ENCODE measurements at regions of chr5 and their contacts with region 1.

Region 1: DNA sequence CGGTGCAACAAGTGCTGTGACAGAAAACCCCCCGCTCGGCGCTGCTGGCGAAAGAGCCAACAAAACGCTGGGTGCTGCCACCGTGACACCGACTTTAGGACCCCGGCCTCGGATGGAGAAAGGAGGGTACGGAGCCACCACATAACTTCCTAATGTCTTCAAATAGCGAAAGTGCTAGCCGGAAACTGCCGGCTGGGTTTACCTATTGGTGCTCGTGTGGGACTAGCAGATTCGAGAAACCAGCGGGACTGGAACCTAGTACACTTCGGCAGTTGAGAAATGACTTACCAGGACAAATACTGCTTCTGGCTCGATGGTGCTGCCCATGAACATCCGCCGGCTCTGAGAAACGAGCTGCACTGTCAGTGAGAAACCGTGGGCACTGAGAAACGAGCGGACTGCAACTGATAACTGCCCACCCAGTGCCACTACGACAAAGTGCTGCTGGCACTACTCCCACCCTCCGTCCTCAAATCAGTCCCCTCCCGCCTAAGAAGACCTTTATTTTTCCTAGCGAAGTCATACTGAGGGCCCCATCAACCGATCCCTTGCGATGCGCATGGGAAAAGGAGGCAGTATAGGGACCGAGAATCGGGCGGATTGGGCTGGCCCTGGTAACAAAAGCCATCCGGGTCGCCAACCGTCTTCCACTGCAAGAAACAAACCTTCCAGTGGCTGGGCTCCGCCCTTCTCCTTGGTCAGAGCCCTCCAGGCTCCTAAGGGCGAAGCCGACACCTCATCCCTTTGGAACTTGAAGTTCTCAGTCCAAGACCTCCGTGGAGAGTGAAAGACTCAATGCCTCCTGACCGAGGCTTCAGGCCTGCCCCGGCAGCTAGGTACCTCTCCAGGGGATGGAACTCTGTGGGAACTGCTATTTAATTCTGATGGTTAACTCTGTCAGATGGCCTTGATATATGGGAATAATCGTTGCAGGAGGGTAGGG is 27.0 kb upstream of the ANXA2R start:
- DNase-seq: peak; percentile 77 to 94 (median 88)
- ATAC-seq: peak; percentile 50 to 64 (median 60)
- H3K4me3 ChIP-seq: peak overlapping the region; percentile 92 to 100
- H3K4me3 Mint-ChIP-seq: peak overlapping the region; percentile 95 to 98 (median 96)
- H3K27ac ChIP-seq: peak overlapping the region; percentile 91
- H3K27ac Mint-ChIP-seq: peak overlapping the region; percentile 99 to 100
- H3K4me1 ChIP-seq: peaks cover 22 to 55% of the 10 kb centered on the region in 2 experiments
- H3K4me1 Mint-ChIP-seq: peaks cover 47 to 60% (median 50%) of the 10 kb centered on the region in 3 donors
- H3K27me3 ChIP-seq: no peaks in the 10 kb centered on the region
- H3K27me3 Mint-ChIP-seq: no peaks in the 10 kb centered on the region

Region 2: DNA sequence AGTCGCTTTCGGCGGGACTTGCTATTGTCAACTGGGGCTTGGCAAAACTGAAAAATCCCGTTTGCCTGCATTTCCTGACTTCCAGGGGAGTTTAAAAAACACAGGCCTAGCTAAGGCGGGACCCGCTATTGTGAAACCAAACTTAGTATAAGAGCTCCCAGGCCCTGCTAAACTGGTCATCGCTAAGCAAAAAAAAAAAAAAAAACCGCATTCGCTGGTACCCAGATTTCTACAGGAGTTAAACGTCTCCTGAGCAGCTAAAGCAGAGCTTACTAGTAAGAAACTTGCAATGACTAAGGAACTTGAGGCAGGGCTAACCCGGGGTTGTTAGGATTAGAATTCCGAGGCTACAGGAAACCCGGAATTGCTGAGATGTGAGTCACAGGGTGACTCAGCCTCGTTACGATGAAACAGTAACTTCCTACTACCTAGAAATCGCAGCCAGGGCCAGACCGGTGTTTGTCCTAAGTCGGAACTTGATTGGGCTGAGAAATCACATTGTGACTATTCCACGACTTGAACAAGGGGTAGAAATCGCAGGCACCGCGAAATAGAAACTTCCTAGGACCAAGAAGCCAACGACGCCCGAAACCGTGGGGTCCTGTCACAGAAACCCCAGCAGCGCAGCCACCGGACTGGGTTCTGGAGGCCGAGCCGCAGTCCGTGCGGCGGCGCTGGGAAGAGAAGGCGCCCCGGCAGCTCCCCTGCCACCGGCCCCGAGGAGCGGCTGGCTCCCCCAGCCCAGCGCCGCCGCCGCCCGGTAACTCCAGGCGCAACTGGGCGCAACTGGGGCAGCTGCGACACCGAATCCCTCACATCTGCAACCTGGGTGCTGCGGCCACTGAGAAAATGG is 116.4 kb before region 1 on chr5:
- CTCF ChIA-PET with region 1: interaction called in 1 of 2 experiments, 3 read pairs
- POLR2A ChIA-PET with region 1: interaction called, 3 to 17 read pairs
- DNase-seq: peak; percentile 17 to 80 (median 41)
- ATAC-seq: peak; percentile 17 to 58 (median 44)
- H3K4me3 ChIP-seq: peak overlapping the region; percentile 77 to 98
- H3K4me3 Mint-ChIP-seq: peak overlapping the region; percentile 96 to 98 (median 98)
- H3K27ac ChIP-seq: peak overlapping the region; percentile 99
- H3K27ac Mint-ChIP-seq: peak overlapping the region; percentile 100
- H3K4me1 ChIP-seq: peaks cover 15 to 46% of the 10 kb centered on the region in 2 experiments
- H3K4me1 Mint-ChIP-seq: peaks cover 34 to 45% (median 40%) of the 10 kb centered on the region in 3 donors
- H3K27me3 ChIP-seq: no peaks in the 10 kb centered on the region
- H3K27me3 Mint-ChIP-seq: no peaks in the 10 kb centered on the region

Region 3: DNA sequence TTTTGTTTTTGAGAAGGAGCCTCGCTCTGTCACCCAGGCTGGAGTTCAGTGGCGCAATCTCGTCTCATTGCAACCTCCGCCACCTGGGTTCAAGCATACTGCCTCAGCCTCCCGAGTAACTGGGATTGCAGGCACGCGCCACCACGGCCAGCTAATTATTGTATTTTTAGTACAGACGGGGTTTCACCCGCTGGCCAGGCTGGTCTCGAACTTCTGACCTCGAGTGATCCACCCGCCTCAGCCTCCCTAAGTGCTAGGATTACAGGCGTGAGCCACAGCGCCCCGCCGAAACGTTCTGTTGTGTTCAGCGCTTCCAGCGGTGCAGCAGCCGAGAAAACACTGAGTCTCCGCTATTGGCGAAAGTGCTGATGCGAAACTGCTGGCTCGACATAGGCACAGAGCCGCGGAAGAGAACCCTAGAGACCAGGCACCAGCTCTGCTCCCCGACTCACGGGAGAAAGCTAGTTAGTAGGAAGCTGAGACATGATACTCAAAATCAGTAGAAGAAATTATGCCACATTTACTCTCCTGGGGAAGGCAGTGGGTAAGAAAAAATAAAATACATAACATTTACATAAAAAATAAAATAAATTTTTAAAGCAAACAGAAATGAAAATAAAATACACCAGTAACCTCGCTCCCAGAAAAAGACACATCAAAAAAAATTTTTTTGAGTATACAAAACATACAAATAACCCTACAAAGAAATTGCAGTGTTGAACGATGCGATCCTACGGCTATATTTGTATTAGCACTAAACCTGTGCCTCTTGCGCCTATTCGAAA is 58.5 kb before region 1 on chr5:
- CTCF ChIA-PET with region 1: interaction called, 3 to 21 read pairs
- POLR2A ChIA-PET with region 1: interaction called, 3 to 20 read pairs
- DNase-seq: peak; percentile 83 to 97 (median 90)
- ATAC-seq: peak; percentile 65 to 72 (median 71)
- H3K4me3 ChIP-seq: peak overlapping the region; percentile 54 to 97
- H3K4me3 Mint-ChIP-seq: peak overlapping the region; percentile 85 to 87 (median 85)
- H3K27ac ChIP-seq: peak overlapping the region; percentile 87
- H3K27ac Mint-ChIP-seq: peak overlapping the region; percentile 96 to 99
- H3K4me1 ChIP-seq: peaks cover 22 to 34% of the 10 kb centered on the region in 2 experiments
- H3K4me1 Mint-ChIP-seq: peaks cover 40 to 51% (median 42%) of the 10 kb centered on the region in 3 donors
- H3K27me3 ChIP-seq: no peaks in the 10 kb centered on the region
- H3K27me3 Mint-ChIP-seq: no peaks in the 10 kb centered on the region

Region 4: DNA sequence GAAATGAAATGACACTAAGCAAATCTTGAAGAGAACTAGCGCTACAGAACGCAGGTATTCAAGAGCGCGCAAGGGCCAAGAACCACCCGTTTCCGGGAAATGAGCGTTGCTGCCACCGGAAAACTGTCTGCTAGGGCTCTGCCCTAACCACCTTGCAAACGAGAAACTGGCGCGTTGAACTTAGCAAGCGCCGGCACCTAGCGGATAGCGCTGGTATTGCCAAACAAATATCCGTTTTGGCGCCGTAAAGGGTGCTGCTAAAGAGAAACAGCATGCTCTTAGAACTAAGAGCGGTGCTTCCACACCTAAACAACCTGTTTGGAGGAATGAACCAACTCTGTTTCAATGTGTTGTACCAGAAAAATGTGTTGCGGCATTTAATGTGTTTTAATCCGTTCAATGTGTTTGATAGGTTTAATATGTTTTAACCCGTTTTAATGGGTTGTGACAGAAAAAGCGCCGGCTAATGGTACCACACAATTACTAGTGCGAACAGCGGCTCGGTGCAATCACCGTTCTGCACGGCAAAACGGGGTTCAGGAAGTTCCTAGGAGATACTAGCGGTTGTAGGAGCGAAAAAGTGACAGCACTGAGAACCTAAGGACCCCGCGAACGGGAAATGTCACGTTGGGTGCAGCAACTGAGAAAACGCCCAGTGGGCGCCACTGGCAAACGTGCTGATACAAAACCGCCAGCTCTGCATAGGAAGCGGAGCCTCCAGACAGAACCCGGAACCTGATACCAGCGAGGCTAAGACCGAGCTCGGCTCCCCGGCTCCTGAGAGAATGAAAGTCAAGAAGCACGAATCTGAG is 26.6 kb before region 1 on chr5 and contains the start of gene ANXA2R:
- CTCF ChIA-PET with region 1: interaction called, 5 to 36 read pairs
- POLR2A ChIA-PET with region 1: interaction called, 3 to 59 read pairs
- DNase-seq: peak; percentile 86 to 97 (median 95)
- ATAC-seq: peak; percentile 59 to 71 (median 63)
- H3K4me3 ChIP-seq: peak within 1 kb of the TSS; percentile 82 to 99
- H3K4me3 Mint-ChIP-seq: peak within 1 kb of the TSS; percentile 93 to 100 (median 95)
- H3K27ac ChIP-seq: peak within 1 kb of the TSS; percentile 98
- H3K27ac Mint-ChIP-seq: peak within 1 kb of the TSS; percentile 98 to 99
- H3K4me1 ChIP-seq: peaks cover 15 to 67% of the 10 kb centered on the region in 2 experiments
- H3K4me1 Mint-ChIP-seq: peaks cover 48 to 61% (median 48%) of the 10 kb centered on the region in 3 donors
- H3K27me3 ChIP-seq: no peaks in the 10 kb centered on the region
- H3K27me3 Mint-ChIP-seq: no peaks in the 10 kb centered on the region
- total RNA-seq, gene ANXA2R: 47.8 to 64.1 (median 53.1) TPM

Region 5: DNA sequence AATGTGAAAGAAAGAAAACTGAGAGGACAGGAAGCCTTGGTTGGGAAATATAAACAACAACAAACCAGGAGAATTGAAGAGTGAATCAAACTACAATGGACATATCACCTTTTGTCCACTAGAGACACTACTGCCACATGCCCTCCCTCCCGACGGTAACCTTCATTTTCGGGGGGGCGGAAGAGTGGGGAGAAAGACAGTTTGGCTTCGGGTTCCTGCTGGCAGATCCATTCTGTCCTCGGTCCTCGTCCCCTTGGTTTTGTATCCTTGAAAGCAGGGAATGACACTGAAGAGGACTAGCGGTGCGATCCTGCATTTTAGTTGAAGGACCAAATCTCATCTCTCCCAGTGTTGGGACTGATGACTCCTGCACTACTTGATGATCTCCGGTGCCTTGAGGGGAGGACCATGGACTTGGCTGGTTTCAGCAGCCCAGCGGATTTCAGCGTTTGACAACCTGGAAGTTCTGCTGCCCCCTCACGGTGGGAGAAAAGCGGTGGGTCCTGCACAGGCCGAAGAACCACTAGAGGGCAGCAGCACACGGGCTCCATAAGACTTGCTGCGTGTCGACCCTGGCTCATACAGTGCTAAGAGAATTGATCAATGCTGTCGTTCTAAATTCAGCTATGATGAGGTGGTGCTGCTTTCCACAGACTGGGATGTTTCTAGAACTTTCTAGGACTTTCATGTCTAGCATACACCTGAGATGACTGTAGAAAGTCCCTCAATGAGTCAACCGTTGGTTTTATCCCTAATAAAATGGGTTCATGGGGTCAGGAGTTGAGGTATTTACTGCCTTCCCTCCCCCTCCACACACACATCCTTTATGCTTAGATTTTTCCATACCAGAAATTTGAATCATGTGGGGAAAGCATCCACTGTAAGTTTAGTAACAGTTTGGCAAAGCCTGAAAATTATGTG is 38.6 kb after region 1 on chr5:
- CTCF ChIA-PET with region 1: interaction called, 7 to 10 read pairs
- POLR2A ChIA-PET with region 1: interaction called in 1 of 2 experiments, 7 read pairs
- DNase-seq: peak; percentile 75 to 97 (median 87)
- ATAC-seq: peak; percentile 92 to 97 (median 96)
- H3K4me3 ChIP-seq: peak overlapping the region; percentile 58 to 65
- H3K4me3 Mint-ChIP-seq: peak overlapping the region; percentile 76 to 82 (median 78)
- H3K27ac ChIP-seq: peak overlapping the region; percentile 62
- H3K27ac Mint-ChIP-seq: peak overlapping the region; percentile 75 to 84
- H3K4me1 ChIP-seq: peaks cover 12 to 32% of the 10 kb centered on the region in 2 experiments
- H3K4me1 Mint-ChIP-seq: peaks cover 35 to 44% (median 38%) of the 10 kb centered on the region in 3 donors
- H3K27me3 ChIP-seq: no peaks in the 10 kb centered on the region
- H3K27me3 Mint-ChIP-seq: no peaks in the 10 kb centered on the region

Region 6: GRCh38 chr5:43484106-43484849 is 417.2 kb after region 1 on chr5:
- CTCF ChIA-PET with region 1: interaction called, 3 to 4 read pairs
- POLR2A ChIA-PET with region 1: interaction called in 1 of 2 experiments, 12 read pairs
- DNase-seq: peak; percentile 75 to 91 (median 82)
- ATAC-seq: peak; percentile 73 to 77 (median 76)
- H3K4me3 ChIP-seq: peak overlapping the region; percentile 62 to 88
- H3K4me3 Mint-ChIP-seq: peak overlapping the region; percentile 89 to 99 (median 95)
- H3K27ac ChIP-seq: peak overlapping the region; percentile 93
- H3K27ac Mint-ChIP-seq: peak overlapping the region; percentile 100
- H3K4me1 ChIP-seq: peaks cover 9 to 25% of the 10 kb centered on the region in 2 experiments
- H3K4me1 Mint-ChIP-seq: peaks cover 50 to 55% (median 53%) of the 10 kb centered on the region in 3 donors
- H3K27me3 ChIP-seq: no peaks in the 10 kb centered on the region
- H3K27me3 Mint-ChIP-seq: no peaks in the 10 kb centered on the region

Measured in T-cell (primary cell).